GM12878 (cell line): ENCODE measurements at regions of chr11 and their contacts with region 1.

Region 1: DNA sequence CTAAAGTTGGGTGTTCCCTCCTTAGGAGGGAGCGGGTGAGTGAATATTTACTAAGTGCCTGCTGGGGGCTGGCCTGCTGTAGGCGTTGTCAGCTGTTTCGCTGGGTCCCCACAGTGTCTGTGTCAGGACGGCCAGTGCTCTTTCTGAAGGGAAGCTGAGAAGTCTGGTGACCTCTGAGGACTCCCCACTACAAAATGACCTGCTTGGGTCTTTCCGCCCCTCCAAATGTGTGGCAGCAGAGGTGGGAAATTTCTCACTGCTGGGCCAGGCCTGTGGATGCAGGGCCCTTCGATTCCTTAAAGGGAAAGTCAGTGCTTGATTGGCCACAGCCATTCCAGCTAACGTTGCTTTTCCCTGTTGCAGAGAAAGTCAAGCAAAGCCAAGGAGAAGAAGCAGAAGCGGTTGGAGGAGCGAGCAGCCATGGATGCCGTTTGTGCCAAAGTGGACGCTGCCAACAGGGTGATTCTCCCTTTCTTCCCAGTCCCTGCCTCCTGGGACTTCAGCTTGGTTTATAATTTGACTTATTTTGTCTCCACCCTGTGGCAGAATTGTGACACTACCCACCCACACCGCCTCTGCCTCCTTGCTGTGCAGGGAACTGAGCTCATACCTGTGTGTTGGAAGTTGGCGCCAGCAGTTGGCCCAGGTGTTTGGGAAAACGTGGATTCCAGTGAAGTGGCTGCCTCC is 6.8 kb downstream of the NAA40 start:
- DNase-seq: no peak
- ATAC-seq: peak; percentile 94
- H3K4me3 ChIP-seq: no peak overlapping the region
- H3K27ac ChIP-seq: no peak overlapping the region
- H3K4me1 ChIP-seq: peaks cover 16% of the 10 kb centered on the region
- H3K27me3 ChIP-seq: no peaks in the 10 kb centered on the region
- CTCF ChIP-seq: peak; percentile 61 to 81 (median 69); a peak in 5 of 6 replicates
- EP300 ChIP-seq: no peak
- POLR2A ChIP-seq: no peak
- RAD21 ChIP-seq: peak; percentile 65

Region 2: GRCh38 chr11:63768237-63769043 is 177.2 kb before region 1 on chr11 and contains the start of gene ZFTA:
- CTCF ChIA-PET with region 1: interaction called, 18 read pairs
- POLR2A ChIA-PET with region 1: no interaction called
- RAD21 ChIA-PET with region 1: interaction called, 14 read pairs
- SMC1A ChIA-PET with region 1: interaction called, 4 read pairs
- in situ Hi-C with region 1: no loop called
- intact Hi-C with region 1: loop called (anchors 5 kb)
- DNase-seq: no peak
- ATAC-seq: peak; percentile 68
- H3K4me3 ChIP-seq: peak within 1 kb of the TSS; percentile 86
- H3K27ac ChIP-seq: peak within 1 kb of the TSS; percentile 44
- H3K4me1 ChIP-seq: peaks cover 8% of the 10 kb centered on the region; the same call in 1 of the 2 replicates
- H3K27me3 ChIP-seq: peaks cover 3 to 4% of the 10 kb centered on the region in 2 experiments
- CTCF ChIP-seq: peak; percentile 54 to 74 (median 65); a peak in 5 of 6 replicates
- EP300 ChIP-seq: no peak
- POLR2A ChIP-seq: peak; percentile 29; the same call in 1 of the 2 replicates
- RAD21 ChIP-seq: peak; percentile 75
- polyA plus RNA-seq, gene ZFTA: 0.39 to 0.99 TPM

Region 3: DNA sequence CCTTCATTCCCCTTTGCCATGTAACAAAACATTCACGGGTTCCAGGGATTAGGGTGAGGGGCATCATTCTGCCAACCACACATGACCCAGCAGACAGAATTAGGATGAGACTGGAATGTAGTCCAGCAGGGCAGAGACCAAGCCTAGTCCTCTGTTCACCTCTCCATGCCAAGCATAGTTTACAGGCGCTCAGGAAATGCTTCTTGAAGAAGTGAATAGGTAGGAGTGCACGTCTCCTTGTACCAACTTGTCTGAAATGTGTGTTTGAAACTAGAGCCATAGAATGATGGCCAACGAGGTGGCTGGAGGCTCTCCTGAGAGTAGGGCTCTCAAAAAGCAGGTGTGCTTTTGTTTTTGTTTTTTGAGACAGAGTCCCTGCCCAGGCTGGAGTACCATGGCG is 124.2 kb before region 1 on chr11:
- CTCF ChIA-PET with region 1: no interaction called
- POLR2A ChIA-PET with region 1: no interaction called
- RAD21 ChIA-PET with region 1: no interaction called
- SMC1A ChIA-PET with region 1: no interaction called
- in situ Hi-C with region 1: no loop called
- intact Hi-C with region 1: no loop called
- DNase-seq: no peak
- ATAC-seq: no peak
- H3K4me3 ChIP-seq: no peak overlapping the region
- H3K27ac ChIP-seq: no peak overlapping the region
- H3K4me1 ChIP-seq: no peaks in the 10 kb centered on the region
- H3K27me3 ChIP-seq: no peaks in the 10 kb centered on the region
- CTCF ChIP-seq: no peak
- EP300 ChIP-seq: no peak
- POLR2A ChIP-seq: no peak
- RAD21 ChIP-seq: no peak

Region 4: GRCh38 chr11:63855975-63856749 is 89.5 kb before region 1 on chr11:
- CTCF ChIA-PET with region 1: interaction called, 10 read pairs
- POLR2A ChIA-PET with region 1: no interaction called
- RAD21 ChIA-PET with region 1: no interaction called
- SMC1A ChIA-PET with region 1: interaction called, 8 read pairs
- in situ Hi-C with region 1: no loop called
- intact Hi-C with region 1: no loop called
- DNase-seq: no peak
- ATAC-seq: peak; percentile 64
- H3K4me3 ChIP-seq: no peak overlapping the region
- H3K27ac ChIP-seq: no peak overlapping the region; the same call in 1 of the 2 replicates
- H3K4me1 ChIP-seq: peaks cover 7% of the 10 kb centered on the region; the same call in 1 of the 2 replicates
- H3K27me3 ChIP-seq: no peaks in the 10 kb centered on the region
- CTCF ChIP-seq: no peak
- EP300 ChIP-seq: no peak
- POLR2A ChIP-seq: no peak
- RAD21 ChIP-seq: no peak

Region 5: GRCh38 chr11:63871962-63872799 is 73.4 kb before region 1 on chr11:
- CTCF ChIA-PET with region 1: interaction called, 15 read pairs
- POLR2A ChIA-PET with region 1: interaction called, 4 read pairs
- RAD21 ChIA-PET with region 1: interaction called, 15 read pairs
- SMC1A ChIA-PET with region 1: interaction called, 6 read pairs
- in situ Hi-C with region 1: no loop called
- intact Hi-C with region 1: no loop called
- DNase-seq: peak; percentile 77
- ATAC-seq: peak; percentile 99
- H3K4me3 ChIP-seq: no peak overlapping the region
- H3K27ac ChIP-seq: no peak overlapping the region
- H3K4me1 ChIP-seq: peaks cover 36% of the 10 kb centered on the region
- H3K27me3 ChIP-seq: no peaks in the 10 kb centered on the region
- CTCF ChIP-seq: peak; percentile 54 to 78 (median 57); a peak in 5 of 6 replicates
- EP300 ChIP-seq: no peak
- POLR2A ChIP-seq: no peak
- RAD21 ChIP-seq: peak; percentile 73

Region 6: DNA sequence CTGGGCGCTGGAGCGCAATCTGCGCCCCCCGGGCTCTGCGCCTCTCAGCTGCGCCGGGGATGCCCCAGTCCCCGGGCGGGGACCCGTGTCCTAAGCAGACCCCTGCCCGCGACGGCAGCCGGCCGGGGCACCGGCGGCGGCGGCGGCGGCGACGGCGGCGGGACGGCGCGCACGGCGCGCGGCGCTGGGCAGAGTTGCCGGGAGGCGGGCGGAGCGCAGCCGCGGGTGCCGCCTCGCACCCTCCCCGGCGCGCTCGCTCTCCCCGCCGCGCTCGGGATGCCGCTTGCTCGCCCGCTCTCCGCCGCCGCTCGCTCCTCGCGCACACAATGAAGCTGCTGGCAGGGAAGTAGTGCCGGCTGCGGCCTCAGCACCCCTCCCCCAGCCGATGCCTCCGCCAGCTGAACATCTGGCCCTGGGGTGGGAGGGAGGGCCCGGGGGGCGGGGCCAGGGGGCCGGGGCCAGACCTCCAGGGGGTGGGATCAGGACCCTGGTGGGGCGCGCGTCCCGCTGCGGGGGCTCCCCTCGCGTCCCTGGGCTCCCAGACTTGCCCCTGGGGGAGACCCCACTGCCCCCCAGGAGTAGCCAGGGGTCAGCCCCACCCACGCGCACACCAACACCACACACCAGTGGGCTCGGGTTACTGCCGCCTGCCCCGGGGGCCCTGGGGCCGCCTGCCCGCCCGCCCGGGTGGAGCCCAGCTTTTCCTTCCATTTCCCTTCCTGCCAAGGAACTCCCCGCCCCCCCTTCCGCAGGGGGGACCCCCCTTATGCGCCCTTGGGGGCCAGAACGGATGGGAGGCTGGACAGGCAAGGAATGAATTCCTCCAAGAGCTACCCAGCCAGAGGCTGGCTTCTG is 28.6 kb before region 1 on chr11 and contains the start of gene RCOR2:
- CTCF ChIA-PET with region 1: interaction called, 17 read pairs
- POLR2A ChIA-PET with region 1: interaction called, 4 read pairs
- RAD21 ChIA-PET with region 1: interaction called, 4 read pairs
- SMC1A ChIA-PET with region 1: interaction called, 5 read pairs
- in situ Hi-C with region 1: no loop called
- intact Hi-C with region 1: no loop called
- DNase-seq: no peak
- ATAC-seq: peak; percentile 53
- H3K4me3 ChIP-seq: peak within 1 kb of the TSS; percentile 59
- H3K27ac ChIP-seq: no peak within 1 kb of the TSS
- H3K4me1 ChIP-seq: peaks cover 10% of the 10 kb centered on the region
- H3K27me3 ChIP-seq: peaks cover 0 to 3% of the 10 kb centered on the region in 2 experiments; a peak in 3 of 4 replicates
- CTCF ChIP-seq: no peak
- EP300 ChIP-seq: no peak
- POLR2A ChIP-seq: peak; percentile 56; the same call in 1 of the 2 replicates
- RAD21 ChIP-seq: no peak
- polyA plus RNA-seq, gene RCOR2: not detected

Region 7: GRCh38 chr11:63986156-63986931 is 40.7 kb after region 1 on chr11 and contains the start of gene OTUB1:
- CTCF ChIA-PET with region 1: no interaction called
- POLR2A ChIA-PET with region 1: no interaction called
- RAD21 ChIA-PET with region 1: no interaction called
- SMC1A ChIA-PET with region 1: no interaction called
- in situ Hi-C with region 1: no loop called
- intact Hi-C with region 1: no loop called
- DNase-seq: peak; percentile 47
- ATAC-seq: peak; percentile 96
- H3K4me3 ChIP-seq: peak within 1 kb of the TSS; percentile 88
- H3K27ac ChIP-seq: peak within 1 kb of the TSS; percentile 68
- H3K4me1 ChIP-seq: peaks cover 22% of the 10 kb centered on the region
- H3K27me3 ChIP-seq: no peaks in the 10 kb centered on the region
- CTCF ChIP-seq: no peak
- EP300 ChIP-seq: no peak
- POLR2A ChIP-seq: peak; percentile 96
- RAD21 ChIP-seq: no peak
- polyA plus RNA-seq, gene OTUB1: 125 to 225 TPM